Thyroid gland (tissue), 4 donors: ENCODE measurements at regions of chr19 and their contacts with region 1.

Region 1: DNA sequence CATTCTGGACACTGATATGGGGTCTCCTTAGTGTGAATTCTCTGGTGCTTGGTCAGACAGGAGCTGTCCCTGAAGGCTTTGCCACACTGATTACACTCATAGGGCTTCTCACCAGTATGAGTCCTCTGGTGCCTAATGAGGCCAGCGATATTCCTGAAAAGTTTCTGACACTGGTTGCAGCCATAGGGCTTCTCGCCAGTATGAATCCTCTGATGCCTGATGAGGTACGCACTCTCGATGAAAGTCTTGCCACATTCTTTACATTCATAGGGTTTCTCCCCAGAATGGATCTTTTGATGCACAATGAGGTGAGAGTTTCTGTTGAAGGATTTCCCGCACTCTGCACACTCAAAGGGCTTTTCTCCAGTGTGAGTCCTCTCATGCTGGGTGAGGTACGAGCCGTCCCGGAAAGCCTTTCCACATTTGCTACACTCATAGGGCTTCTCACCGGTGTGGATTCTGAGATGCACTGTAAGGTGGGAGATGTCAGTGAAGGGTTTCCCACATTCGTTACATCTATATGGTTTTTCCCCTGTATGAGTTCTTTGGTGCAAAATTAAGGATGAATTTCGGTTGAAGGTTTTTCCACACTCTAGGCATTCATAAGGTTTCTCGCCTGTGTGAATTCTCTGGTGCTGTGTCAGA is 22.4 kb downstream of the ZNF329 start:
- DNase-seq: no peak
- H3K4me3 ChIP-seq: no peak overlapping the region
- H3K27ac ChIP-seq: no peak overlapping the region
- H3K4me1 ChIP-seq: no peaks in the 10 kb centered on the region
- H3K27me3 ChIP-seq: no peaks in the 10 kb centered on the region
- CTCF ChIP-seq: no peak
- POLR2A ChIP-seq: no peak

Region 2: DNA sequence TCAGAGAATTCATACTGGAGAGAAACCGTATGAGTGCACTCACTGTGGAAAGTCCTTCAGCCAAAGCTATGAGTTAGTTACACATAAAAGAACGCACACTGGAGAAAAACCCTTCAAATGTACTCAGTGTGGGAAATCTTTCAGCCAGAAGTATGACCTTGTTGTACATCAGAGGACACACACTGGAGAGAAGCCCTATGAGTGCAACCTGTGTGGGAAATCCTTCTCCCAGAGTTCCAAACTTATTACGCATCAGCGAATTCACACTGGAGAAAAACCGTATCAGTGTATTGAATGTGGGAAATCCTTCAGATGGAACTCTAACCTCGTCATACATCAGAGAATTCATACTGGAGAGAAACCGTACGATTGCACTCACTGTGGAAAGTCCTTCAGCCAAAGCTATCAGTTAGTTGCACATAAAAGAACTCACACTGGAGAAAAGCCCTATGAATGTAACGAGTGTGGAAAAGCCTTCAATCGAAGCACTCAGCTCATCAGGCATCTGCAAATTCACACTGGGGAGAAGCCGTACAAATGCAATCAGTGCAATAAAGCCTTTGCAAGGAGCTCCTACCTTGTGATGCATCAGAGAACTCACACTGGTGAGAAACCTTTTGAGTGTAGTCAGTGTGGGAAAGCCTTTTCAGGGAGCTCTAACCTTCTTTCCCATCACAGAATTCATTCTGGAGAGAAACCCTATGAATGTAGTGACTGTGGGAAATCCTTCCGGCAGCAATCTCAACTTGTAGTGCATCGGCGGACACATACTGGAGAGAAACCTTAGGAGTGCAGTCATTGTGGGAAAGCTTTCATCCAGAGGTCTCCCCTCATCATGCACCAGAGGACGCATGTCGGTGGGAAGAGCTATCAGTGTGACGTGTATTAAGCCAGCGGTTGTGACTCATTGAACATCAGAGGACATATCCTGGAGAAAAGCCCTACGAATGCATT is 134.1 kb after region 1 on chr19:
- intact Hi-C with region 1: loop called (anchors 5 kb)
- DNase-seq: no peak
- H3K4me3 ChIP-seq: no peak overlapping the region
- H3K27ac ChIP-seq: no peak overlapping the region
- H3K4me1 ChIP-seq: no peaks in the 10 kb centered on the region
- H3K27me3 ChIP-seq: no peaks in the 10 kb centered on the region
- CTCF ChIP-seq: no peak
- POLR2A ChIP-seq: no peak